Dorsolateral prefrontal cortex (tissue), 120 donors: ENCODE measurements at regions of chr5 and their contacts with region 1.

Region 1: DNA sequence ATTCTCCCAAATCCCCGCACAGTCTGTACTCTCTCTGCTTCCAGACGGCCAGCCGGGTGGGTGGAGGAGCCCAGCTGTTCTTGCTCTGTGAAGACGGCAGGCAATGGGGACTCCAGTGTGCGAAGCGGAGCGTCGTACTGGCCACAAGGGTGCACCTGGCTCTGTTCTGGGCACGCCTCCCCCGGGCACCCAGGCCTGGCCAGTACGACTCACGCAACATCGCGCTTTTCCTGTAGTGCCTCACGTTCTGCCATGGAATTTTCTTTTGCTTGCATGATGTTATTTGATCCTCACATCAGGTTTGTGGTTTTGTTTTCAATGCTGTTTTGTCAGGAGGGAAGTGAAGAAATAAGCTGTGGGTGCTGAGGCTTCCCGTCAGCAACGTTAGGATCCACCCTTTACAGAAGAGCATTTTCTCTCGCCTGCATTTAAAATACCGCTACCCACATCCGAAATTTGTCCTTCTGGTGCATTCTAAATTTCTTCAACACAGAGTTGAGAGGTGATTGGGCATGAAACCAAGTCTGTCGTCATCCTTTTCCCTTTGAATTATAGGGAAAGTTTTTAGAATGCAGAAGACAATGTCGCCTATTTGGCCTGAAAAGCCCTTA is 311.7 kb downstream of the TRIM36 start:
- DNase-seq: peak in 9 of 10 donors; percentile 10 to 80 (median 67)
- H3K4me3 ChIP-seq: peak overlapping the region in 56 of 59 donors; percentile 1 to 58 (median 36)
- H3K27ac ChIP-seq: peak overlapping the region in 50 of 59 donors; percentile 2 to 85 (median 61)
- H3K27me3 ChIP-seq: no peaks in the 10 kb centered on the region
- CTCF ChIP-seq: peak in 1 of 56 donors; percentile 9

Region 2: GRCh38 chr5:114948986-114949621 is 91.1 kb after region 1 on chr5:
- intact Hi-C with region 1: loop called in 1 of 2 experiments (anchors 1 kb)
- DNase-seq: peak in 1 of 10 donors; percentile 54
- H3K4me3 ChIP-seq: no peak overlapping the region
- H3K27ac ChIP-seq: peak overlapping the region in 47 of 59 donors; percentile 1 to 86 (median 61)
- H3K27me3 ChIP-seq: no peaks in the 10 kb centered on the region
- CTCF ChIP-seq: no peak